ENCODE measurements at regions of chr12 and their contacts with region 1.

Region 1: DNA sequence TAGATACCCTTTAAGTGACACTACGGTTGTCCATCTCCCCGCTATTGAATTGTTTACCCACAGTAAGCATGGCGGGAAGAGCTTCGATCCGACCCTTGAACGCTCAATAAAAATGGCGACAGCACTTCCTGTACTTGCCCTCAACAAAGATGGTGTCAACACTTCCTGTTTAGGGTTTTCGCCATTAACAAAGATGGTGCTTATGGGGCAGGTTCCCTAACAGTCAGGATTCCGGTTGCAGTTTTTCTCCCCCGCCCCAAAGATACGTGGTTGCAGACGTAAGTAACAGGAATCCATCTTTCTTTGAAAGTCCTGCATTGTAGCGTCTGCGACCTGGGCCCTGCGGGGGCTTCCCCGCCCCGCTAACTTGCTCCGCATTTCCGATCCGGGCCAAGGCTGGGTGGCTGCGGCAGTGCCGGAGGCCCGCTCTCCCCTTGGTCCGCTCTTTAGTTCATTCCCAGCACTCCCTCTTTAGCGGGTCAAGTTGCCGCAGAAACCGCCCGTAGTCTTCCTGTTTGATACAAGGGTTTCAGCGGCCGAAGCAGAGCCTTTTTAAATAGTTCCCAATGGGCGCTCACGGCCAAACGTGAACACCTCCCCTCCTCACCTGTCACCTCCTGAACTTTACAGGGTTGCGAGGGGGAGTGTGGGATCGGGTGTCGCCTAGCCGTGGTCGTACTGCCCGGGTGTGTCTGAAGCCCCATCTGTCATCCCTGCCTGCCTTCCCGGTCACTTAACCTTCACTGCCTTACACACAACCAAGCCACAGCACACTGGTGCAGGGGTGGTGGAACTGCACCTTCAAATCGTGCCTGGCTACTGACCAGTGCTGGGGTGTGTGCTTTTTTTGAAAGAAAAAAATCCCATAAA is at the start of gene CRADD:
- DNase-seq: peak; percentile 87
- total RNA-seq, gene CRADD: 50.8 TPM

Region 2: GRCh38 chr12:93591137-93591868 is 86.1 kb before region 1 on chr12:
- intact Hi-C with region 1: loop called (anchors 5 kb)
- DNase-seq: peak; percentile 91

Region 3: GRCh38 chr12:93616584-93617101 is 60.8 kb before region 1 on chr12:
- intact Hi-C with region 1: no loop called
- DNase-seq: no peak

Region 4: DNA sequence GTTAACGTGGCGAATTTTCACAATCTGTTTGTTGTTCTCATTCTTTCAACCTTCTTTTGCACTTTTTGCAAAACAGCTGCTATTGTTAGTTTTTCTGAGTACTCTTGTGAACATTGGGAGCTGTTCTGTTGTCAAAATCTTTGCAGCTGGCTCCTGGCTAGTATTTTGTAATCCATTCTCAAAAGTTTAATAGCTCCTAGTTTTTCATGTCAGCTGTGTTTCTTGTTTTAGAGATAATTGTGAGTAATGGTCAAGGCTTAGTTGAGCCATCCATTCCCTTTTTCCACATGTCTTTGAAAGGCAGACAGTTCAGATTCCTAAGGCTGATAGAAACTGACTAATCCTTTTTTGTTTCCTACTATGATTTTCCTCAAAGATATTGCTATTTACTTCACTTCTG is 39.3 kb before region 1 on chr12:
- intact Hi-C with region 1: no loop called
- DNase-seq: no peak

Region 5: DNA sequence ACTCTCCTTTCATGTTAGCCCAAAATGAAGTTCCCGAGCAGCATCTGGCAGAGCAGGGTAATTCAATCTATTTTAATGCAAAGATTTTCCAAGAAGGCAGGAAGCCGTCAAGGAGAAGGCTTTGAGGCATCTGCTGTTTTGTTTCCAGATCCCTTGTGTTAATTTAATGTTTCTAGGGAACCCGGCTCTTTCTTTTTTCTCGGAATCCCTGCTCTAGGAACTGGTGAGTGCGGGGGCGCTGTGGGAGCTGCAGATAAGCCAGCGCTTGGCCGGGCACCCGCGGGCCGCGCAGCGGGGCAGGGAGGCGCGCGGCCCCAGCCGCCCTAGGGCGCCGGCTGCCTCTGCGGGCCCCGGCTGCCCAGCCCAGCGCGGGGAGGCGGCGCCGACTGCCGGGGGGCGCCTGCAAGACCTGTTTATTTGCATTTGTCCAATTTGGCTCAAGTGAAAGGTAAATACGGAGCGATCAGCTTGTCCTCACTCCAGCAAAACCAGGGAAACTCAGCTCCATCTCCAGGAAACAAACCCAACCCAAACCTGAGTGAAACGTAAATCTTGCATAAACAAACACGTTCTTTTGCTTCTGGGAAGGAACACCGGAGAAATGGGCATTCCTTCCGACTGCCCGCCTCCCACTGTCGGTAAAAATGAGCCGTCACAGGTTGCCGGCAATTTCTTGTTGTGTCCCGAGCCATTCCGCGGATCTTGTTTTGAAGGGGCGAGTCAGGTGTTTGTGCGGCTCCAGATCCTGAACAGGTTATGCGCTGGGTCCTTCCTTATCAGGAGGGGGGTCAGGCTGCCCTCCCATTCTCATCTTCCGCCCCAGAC is 64.9 kb after region 1 on chr12:
- intact Hi-C with region 1: loop called (anchors 2 kb)
- DNase-seq: peak; percentile 87

Region 6: GRCh38 chr12:93813972-93814821 is 136.8 kb after region 1 on chr12:
- intact Hi-C with region 1: loop called (anchors 5 kb)
- DNase-seq: peak; percentile 90

Region 7: GRCh38 chr12:93979189-93979588 is 301.8 kb after region 1 on chr12:
- intact Hi-C with region 1: loop called (anchors 10 kb)
- DNase-seq: no peak

Measured in cardiac septum (tissue), 1 donor.